WTC11 (cell line): ENCODE measurements at regions of chr10 and their contacts with region 1.

Region 1: GRCh38 chr10:102399217-102400089 is 3.9 kb downstream of the NFKB2 start:
- DNase-seq: peak; percentile 91
- ATAC-seq: peak; percentile 67
- H3K4me3 Mint-ChIP-seq: peak overlapping the region; percentile 58
- H3K27ac Mint-ChIP-seq: no peak overlapping the region
- H3K4me1 Mint-ChIP-seq: peaks cover 13% of the 10 kb centered on the region
- H3K27me3 Mint-ChIP-seq: peaks cover 23% of the 10 kb centered on the region
- CTCF ChIP-seq: peak; percentile 92

Region 2: DNA sequence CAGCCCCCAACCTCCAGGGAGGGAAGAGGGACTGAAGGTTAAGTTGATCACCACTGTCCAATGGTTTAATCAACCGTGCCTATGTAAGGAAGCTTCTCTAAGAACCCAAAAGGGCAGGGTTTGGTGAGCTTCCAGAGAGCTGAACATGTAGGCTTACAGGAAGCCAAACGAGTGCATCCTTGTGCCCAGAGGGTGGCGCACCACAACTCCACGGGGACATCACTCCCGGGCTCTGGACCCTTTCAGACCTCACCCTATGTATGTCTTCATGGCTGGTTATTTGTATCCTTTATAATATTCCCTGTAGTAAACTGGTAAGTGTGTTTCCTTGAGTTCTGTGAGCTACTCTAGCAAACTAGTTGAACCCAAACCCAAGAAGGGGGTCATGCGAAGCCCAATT is 15.4 kb before region 1 on chr10:
- CTCF ChIA-PET with region 1: interaction called, 50 read pairs
- POLR2A ChIA-PET with region 1: no interaction called
- DNase-seq: peak; percentile 72
- ATAC-seq: peak; percentile 93
- H3K4me3 Mint-ChIP-seq: no peak overlapping the region
- H3K27ac Mint-ChIP-seq: no peak overlapping the region
- H3K4me1 Mint-ChIP-seq: no peaks in the 10 kb centered on the region
- H3K27me3 Mint-ChIP-seq: no peaks in the 10 kb centered on the region; the same call in 1 of the 2 replicates
- CTCF ChIP-seq: no peak

Region 3: DNA sequence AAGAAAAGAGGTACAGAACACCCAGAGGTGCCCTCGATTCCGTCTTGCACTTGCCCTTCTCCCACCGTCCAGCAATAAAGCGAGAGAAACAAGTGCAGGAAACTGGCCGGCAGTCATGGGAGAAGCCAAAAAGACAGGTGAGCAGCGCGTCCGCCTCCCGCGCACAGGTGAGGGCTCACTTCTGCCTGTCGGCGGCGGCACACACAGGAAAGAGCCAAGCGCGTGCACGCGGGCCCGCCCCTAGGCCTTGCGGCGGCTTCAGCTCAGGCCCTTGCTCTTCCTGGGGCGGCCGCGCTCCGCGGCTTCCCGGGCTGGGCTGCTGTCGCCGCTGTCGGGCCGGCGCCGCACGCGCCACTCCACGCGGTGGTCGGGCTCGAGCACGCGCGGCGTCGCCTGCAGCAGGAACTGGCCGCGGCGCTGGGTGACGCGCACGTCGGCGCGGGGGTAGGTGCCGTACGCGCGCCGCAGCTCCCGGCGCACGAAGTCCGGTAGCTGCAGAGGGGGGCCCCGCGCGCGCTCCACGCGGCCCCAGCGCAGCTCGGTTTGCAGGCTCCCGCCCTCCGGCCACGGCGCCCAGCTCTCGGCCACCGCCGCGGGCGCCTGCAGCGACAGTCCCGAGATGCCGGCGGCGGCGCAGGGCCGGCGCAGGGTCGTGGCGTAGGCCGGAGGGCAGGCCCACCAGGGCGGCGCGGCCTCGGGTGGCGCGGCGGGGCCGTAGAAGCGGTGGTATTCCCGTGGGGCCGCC is 50.9 kb after region 1 on chr10:
- CTCF ChIA-PET with region 1: interaction called, 27 read pairs
- POLR2A ChIA-PET with region 1: interaction called, 6 read pairs
- DNase-seq: peak; percentile 80
- ATAC-seq: peak; percentile 52
- H3K4me3 Mint-ChIP-seq: peak overlapping the region; percentile 93
- H3K27ac Mint-ChIP-seq: peak overlapping the region; percentile 83
- H3K4me1 Mint-ChIP-seq: peaks cover 39% of the 10 kb centered on the region
- H3K27me3 Mint-ChIP-seq: no peaks in the 10 kb centered on the region
- CTCF ChIP-seq: no peak

Region 4: GRCh38 chr10:102479651-102480050 is 80.2 kb after region 1 on chr10:
- CTCF ChIA-PET with region 1: interaction called, 10 read pairs
- POLR2A ChIA-PET with region 1: no interaction called
- DNase-seq: no peak
- ATAC-seq: no peak
- H3K4me3 Mint-ChIP-seq: no peak overlapping the region
- H3K27ac Mint-ChIP-seq: no peak overlapping the region
- H3K4me1 Mint-ChIP-seq: no peaks in the 10 kb centered on the region
- H3K27me3 Mint-ChIP-seq: no peaks in the 10 kb centered on the region
- CTCF ChIP-seq: no peak